Esophagus squamous epithelium (tissue), 5 donors: ENCODE measurements at regions of chr21 and their contacts with region 1.

Region 1: DNA sequence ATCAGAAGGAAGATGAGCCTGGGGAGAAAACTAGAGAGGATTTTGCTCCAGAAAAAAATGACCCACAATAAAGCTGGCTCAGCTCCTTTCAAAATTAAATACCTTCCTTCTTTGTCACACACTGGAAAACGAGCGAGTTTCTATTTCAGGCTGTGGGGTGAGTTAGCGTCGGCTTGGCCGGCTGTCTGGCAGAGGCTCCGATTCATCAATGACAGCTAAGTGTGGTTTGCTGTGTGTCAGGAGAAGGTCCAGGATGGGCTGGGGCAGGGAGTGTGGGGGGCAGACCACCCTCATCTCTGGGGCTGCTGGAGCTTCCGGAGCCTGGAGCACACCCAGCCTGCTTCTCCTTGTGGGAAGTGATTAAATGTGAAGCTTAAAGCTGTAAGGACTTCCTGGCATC is 120.2 kb downstream of the ETS2 start:
- DNase-seq: no peak
- H3K4me3 ChIP-seq: peak overlapping the region in 3 of 4 donors; percentile 24 to 55 (median 28)
- H3K27ac ChIP-seq: peak overlapping the region; percentile 62 to 83 (median 80)
- H3K4me1 ChIP-seq: peaks cover 11 to 38% (median 17%) of the 10 kb centered on the region in 3 donors
- H3K27me3 ChIP-seq: no peaks in the 10 kb centered on the region
- CTCF ChIP-seq: no peak
- POLR2A ChIP-seq: peak in 1 of 4 donors; percentile 30

Region 2: DNA sequence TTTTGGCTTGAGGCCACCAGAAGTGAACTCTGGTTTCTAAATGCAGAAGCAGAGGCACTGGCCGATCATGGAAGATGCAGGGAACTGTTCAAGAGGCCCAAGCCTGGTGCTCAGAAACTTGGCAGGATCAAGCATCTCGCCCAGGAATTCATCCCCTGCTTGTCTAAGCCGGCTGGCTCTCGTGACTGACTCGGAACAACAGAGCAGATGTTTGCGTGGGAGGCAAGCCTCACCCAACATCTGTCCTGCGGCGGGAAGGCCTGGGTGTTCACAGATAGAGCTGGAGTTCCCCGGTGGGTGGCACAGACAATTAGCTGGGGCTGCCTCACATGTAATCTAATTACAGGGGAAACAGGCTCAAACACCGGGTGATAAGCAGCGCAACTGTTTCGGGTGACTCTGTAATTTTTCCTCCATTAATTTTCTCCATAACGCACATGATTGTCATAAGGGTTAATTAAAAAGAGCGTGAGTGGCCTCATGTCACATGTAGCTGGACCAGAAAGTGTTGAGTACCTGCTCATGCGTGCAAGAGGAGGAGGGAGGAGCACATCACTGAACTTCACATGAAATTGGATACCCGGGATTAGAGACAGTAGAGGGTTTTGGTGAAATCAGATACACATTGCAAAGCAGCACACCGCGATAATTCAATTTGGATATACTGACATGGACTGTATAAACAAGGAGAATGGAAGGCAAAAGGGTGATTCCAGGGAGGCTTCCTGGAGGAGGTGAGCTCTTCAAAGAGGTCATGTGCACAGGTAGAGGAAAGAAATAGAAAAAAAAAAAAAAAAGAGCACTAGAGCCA is 59.9 kb after region 1 on chr21:
- intact Hi-C with region 1: loop called (anchors 10 kb)
- DNase-seq: no peak
- H3K4me3 ChIP-seq: peak overlapping the region in 1 of 4 donors; percentile 34
- H3K27ac ChIP-seq: peak overlapping the region; percentile 53 to 82 (median 82)
- H3K4me1 ChIP-seq: peaks cover 42 to 71% (median 61%) of the 10 kb centered on the region in 3 donors
- H3K27me3 ChIP-seq: no peaks in the 10 kb centered on the region
- CTCF ChIP-seq: no peak
- POLR2A ChIP-seq: no peak

Region 3: GRCh38 chr21:39105341-39105765 is 179.4 kb after region 1 on chr21:
- intact Hi-C with region 1: no loop called
- DNase-seq: no peak
- H3K4me3 ChIP-seq: no peak overlapping the region
- H3K27ac ChIP-seq: peak overlapping the region in 3 of 4 donors; percentile 19 to 68 (median 64)
- H3K4me1 ChIP-seq: peaks cover 5 to 24% (median 10%) of the 10 kb centered on the region in 3 donors
- H3K27me3 ChIP-seq: no peaks in the 10 kb centered on the region
- CTCF ChIP-seq: no peak
- POLR2A ChIP-seq: no peak